ENCODE measurements at regions of chr11 and their contacts with region 1.

Region 1: GRCh38 chr11:107482234-107482633 is 24.6 kb upstream of the CWF19L2 start:
- DNase-seq: no peak
- H3K4me3 ChIP-seq: no peak overlapping the region
- H3K27ac ChIP-seq: no peak overlapping the region
- H3K4me1 ChIP-seq: no peaks in the 10 kb centered on the region
- H3K27me3 ChIP-seq: no peaks in the 10 kb centered on the region
- CTCF ChIP-seq: no peak
- EP300 ChIP-seq: no peak
- POLR2A ChIP-seq: no peak

Region 2: GRCh38 chr11:107397357-107397756 is 84.9 kb before region 1 on chr11:
- intact Hi-C with region 1: no loop called
- DNase-seq: no peak
- H3K4me3 ChIP-seq: no peak overlapping the region
- H3K27ac ChIP-seq: no peak overlapping the region
- H3K4me1 ChIP-seq: no peaks in the 10 kb centered on the region
- H3K27me3 ChIP-seq: no peaks in the 10 kb centered on the region
- CTCF ChIP-seq: no peak
- EP300 ChIP-seq: no peak
- POLR2A ChIP-seq: no peak

Region 3: GRCh38 chr11:107496011-107496410 is 13.8 kb after region 1 on chr11:
- intact Hi-C with region 1: loop called in 1 of 4 experiments (anchors 1 kb)
- DNase-seq: no peak
- H3K4me3 ChIP-seq: no peak overlapping the region
- H3K27ac ChIP-seq: no peak overlapping the region
- H3K4me1 ChIP-seq: no peaks in the 10 kb centered on the region
- H3K27me3 ChIP-seq: no peaks in the 10 kb centered on the region
- CTCF ChIP-seq: no peak
- EP300 ChIP-seq: no peak
- POLR2A ChIP-seq: no peak

Measured in ovary (tissue), 10 donors.